Endothelial cell of umbilical vein (primary cell): ENCODE measurements at regions of chr19 and their contacts with region 1.

Region 1: GRCh38 chr19:10936661-10937084 is 8.1 kb downstream of the TIMM29 start:
- DNase-seq: peak; percentile 86
- H3K4me3 ChIP-seq: no peak overlapping the region
- H3K27ac ChIP-seq: no peak overlapping the region
- H3K4me1 ChIP-seq: peaks cover 7% of the 10 kb centered on the region
- H3K27me3 ChIP-seq: no peaks in the 10 kb centered on the region
- CTCF ChIP-seq: peak; percentile 49 to 60
- POLR2A ChIP-seq: no peak

Region 2: DNA sequence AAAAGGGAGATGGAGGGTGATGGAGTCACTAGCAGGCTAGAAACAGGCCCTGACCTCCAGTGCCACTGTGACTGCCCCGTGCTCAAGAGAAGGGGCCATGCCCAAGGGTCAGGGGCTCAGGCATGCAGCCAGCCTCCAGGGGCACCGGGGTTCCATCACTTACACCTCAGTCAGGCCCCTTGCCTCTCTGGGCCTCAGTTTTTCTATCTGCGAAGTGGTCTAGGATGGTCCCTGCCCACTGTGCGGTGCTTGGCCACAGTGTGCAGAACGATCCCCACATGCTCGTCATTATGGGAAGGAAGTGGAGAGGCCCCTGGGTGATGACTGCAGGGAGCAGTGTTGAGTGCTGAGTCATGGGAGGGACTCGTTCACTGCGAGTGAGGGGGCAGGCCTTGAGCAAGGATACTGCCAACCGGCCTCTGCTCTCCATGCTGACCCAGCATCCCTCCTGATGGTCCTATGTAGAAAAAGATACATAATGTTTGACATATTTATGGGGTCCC is 123.7 kb before region 1 on chr19:
- CTCF ChIA-PET with region 1: no interaction called
- POLR2A ChIA-PET with region 1: no interaction called
- dilution Hi-C with region 1: no loop called
- intact Hi-C with region 1: no loop called
- DNase-seq: peak; percentile 80
- H3K4me3 ChIP-seq: no peak overlapping the region
- H3K27ac ChIP-seq: peak overlapping the region; percentile 72
- H3K4me1 ChIP-seq: peaks cover 8% of the 10 kb centered on the region
- H3K27me3 ChIP-seq: no peaks in the 10 kb centered on the region
- CTCF ChIP-seq: no peak
- POLR2A ChIP-seq: peak; percentile 21

Region 3: DNA sequence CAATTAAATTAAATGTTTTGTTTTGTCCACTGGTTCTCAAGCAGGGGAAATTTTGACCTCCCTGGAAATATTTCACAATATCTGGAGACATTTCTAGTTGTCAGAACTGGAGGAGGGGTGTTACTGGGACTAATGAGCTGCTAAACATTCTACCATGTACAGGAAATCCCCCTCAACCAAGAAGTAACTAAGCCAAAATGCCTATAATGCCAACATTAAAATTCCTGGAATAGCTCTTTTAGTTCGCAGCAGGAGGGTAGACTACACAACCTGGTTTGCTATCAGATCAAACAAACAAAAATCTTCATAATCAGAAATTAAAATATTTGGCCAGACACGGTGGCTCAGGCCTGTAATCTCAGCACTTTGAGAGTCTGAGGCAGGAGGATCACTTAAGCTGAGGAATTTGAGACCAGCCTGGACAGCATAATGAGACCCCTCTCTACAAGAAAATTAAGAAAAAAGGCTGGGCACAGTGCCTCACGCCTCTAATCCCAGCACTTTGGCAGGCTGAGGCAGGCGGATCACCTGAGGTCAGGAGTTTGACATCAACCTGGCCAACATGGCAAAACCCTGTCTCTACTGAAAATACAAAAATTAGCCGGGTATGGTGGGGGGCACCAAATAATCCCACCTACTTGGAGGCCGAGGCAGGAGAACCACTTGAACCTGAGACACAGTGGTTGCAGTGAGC is 10.4 kb after region 1 on chr19:
- CTCF ChIA-PET with region 1: interaction called, 19 read pairs
- POLR2A ChIA-PET with region 1: no interaction called
- dilution Hi-C with region 1: no loop called
- intact Hi-C with region 1: no loop called
- DNase-seq: no peak
- H3K4me3 ChIP-seq: no peak overlapping the region
- H3K27ac ChIP-seq: no peak overlapping the region
- H3K4me1 ChIP-seq: no peaks in the 10 kb centered on the region
- H3K27me3 ChIP-seq: no peaks in the 10 kb centered on the region
- CTCF ChIP-seq: no peak
- POLR2A ChIP-seq: no peak

Region 4: DNA sequence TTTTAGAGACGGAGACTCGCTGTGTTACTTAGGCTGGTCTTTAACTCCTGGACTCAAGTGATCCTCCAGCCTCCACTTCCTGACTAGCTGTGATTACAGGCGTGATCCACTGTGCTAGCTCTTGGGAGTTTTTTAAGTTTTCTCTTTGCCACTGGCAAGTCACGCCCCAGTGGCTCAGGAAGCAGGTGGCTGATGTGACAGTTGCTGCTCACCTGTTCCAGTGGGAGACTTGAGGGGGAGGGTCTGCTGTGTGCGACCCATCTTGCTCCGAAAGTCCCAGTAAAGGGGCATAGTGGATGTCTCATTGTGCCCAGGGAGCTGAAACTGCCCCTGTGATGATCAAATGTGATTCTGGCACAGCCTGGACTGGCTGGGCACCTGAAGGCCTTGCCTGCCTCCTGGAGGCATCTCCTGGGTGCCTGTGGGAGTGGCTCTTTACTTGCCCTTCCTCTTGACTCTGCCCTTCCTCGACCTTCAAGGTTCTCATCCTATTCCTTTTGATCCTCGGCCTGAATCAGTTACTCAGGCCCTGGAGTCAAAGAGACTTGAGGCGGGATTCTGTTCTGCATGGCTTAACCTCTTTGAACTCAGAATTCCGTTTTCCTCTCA is 32.0 kb after region 1 on chr19:
- CTCF ChIA-PET with region 1: interaction called, 35 read pairs
- POLR2A ChIA-PET with region 1: interaction called, 3 read pairs
- dilution Hi-C with region 1: no loop called
- intact Hi-C with region 1: no loop called
- DNase-seq: no peak
- H3K4me3 ChIP-seq: no peak overlapping the region
- H3K27ac ChIP-seq: no peak overlapping the region
- H3K4me1 ChIP-seq: no peaks in the 10 kb centered on the region
- H3K27me3 ChIP-seq: no peaks in the 10 kb centered on the region
- CTCF ChIP-seq: no peak
- POLR2A ChIP-seq: no peak

Region 5: GRCh38 chr19:10998045-10998533 is 61.4 kb after region 1 on chr19:
- CTCF ChIA-PET with region 1: interaction called, 22 read pairs
- POLR2A ChIA-PET with region 1: no interaction called
- dilution Hi-C with region 1: no loop called
- intact Hi-C with region 1: loop called (anchors 5 kb)
- DNase-seq: no peak
- H3K4me3 ChIP-seq: no peak overlapping the region
- H3K27ac ChIP-seq: no peak overlapping the region
- H3K4me1 ChIP-seq: no peaks in the 10 kb centered on the region
- H3K27me3 ChIP-seq: no peaks in the 10 kb centered on the region
- CTCF ChIP-seq: no peak
- POLR2A ChIP-seq: no peak

Region 6: GRCh38 chr19:11018179-11018578 is 81.5 kb after region 1 on chr19:
- CTCF ChIA-PET with region 1: interaction called, 8 read pairs
- POLR2A ChIA-PET with region 1: no interaction called
- dilution Hi-C with region 1: no loop called
- intact Hi-C with region 1: loop called (anchors 5 kb)
- DNase-seq: no peak
- H3K4me3 ChIP-seq: no peak overlapping the region
- H3K27ac ChIP-seq: no peak overlapping the region
- H3K4me1 ChIP-seq: no peaks in the 10 kb centered on the region
- H3K27me3 ChIP-seq: no peaks in the 10 kb centered on the region
- CTCF ChIP-seq: no peak
- POLR2A ChIP-seq: no peak

Region 7: DNA sequence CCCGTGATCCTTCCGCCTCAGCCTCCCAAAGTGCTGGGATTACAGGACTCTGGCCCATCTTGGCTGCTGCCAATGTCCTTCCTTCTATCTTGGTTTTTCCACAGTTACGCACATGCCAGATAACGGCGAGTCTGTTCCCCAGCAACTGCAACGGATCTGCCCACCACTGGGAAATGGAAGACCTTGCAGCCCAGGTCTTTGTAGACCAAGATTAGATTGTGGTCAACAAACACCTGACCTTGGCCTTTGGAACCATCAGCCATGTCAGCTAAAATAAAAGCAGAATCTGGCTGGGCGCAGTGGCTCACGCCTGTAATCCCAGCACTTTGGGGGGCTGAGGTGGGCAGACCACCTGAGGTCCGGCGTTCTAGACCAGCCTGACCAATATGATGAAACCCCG is 142.2 kb after region 1 on chr19:
- CTCF ChIA-PET with region 1: no interaction called
- POLR2A ChIA-PET with region 1: no interaction called
- dilution Hi-C with region 1: no loop called
- intact Hi-C with region 1: no loop called
- DNase-seq: no peak
- H3K4me3 ChIP-seq: no peak overlapping the region
- H3K27ac ChIP-seq: no peak overlapping the region
- H3K4me1 ChIP-seq: peaks cover 4% of the 10 kb centered on the region
- H3K27me3 ChIP-seq: no peaks in the 10 kb centered on the region
- CTCF ChIP-seq: no peak
- POLR2A ChIP-seq: no peak

Region 8: GRCh38 chr19:11090054-11090900 is 153.6 kb after region 1 on chr19:
- CTCF ChIA-PET with region 1: interaction called, 8 read pairs
- POLR2A ChIA-PET with region 1: no interaction called
- dilution Hi-C with region 1: no loop called
- intact Hi-C with region 1: loop called (anchors 10 kb)
- DNase-seq: peak; percentile 91
- H3K4me3 ChIP-seq: peak overlapping the region; percentile 58 to 96 (median 68)
- H3K27ac ChIP-seq: peak overlapping the region; percentile 87
- H3K4me1 ChIP-seq: peaks cover 60% of the 10 kb centered on the region
- H3K27me3 ChIP-seq: no peaks in the 10 kb centered on the region
- CTCF ChIP-seq: no peak
- POLR2A ChIP-seq: peak; percentile 68

Region 9: GRCh38 chr19:11203194-11204075 is 266.8 kb after region 1 on chr19:
- CTCF ChIA-PET with region 1: interaction called, 4 read pairs
- POLR2A ChIA-PET with region 1: no interaction called
- dilution Hi-C with region 1: no loop called
- intact Hi-C with region 1: loop called (anchors 5 kb)
- DNase-seq: peak; percentile 54
- H3K4me3 ChIP-seq: no peak overlapping the region
- H3K27ac ChIP-seq: peak overlapping the region; percentile 49
- H3K4me1 ChIP-seq: peaks cover 5% of the 10 kb centered on the region
- H3K27me3 ChIP-seq: no peaks in the 10 kb centered on the region
- CTCF ChIP-seq: peak; percentile 80 to 93
- POLR2A ChIP-seq: no peak